WTC11 (cell line): ENCODE measurements at regions of chr16 and their contacts with region 1.

Region 1: GRCh38 chr16:12095275-12096156 is 119.0 kb downstream of the SNX29 start:
- DNase-seq: peak; percentile 67
- ATAC-seq: no peak
- H3K4me3 Mint-ChIP-seq: no peak overlapping the region
- H3K27ac Mint-ChIP-seq: no peak overlapping the region
- H3K4me1 Mint-ChIP-seq: peaks cover 62% of the 10 kb centered on the region
- H3K27me3 Mint-ChIP-seq: peaks cover 8% of the 10 kb centered on the region
- CTCF ChIP-seq: peak; percentile 91

Region 2: DNA sequence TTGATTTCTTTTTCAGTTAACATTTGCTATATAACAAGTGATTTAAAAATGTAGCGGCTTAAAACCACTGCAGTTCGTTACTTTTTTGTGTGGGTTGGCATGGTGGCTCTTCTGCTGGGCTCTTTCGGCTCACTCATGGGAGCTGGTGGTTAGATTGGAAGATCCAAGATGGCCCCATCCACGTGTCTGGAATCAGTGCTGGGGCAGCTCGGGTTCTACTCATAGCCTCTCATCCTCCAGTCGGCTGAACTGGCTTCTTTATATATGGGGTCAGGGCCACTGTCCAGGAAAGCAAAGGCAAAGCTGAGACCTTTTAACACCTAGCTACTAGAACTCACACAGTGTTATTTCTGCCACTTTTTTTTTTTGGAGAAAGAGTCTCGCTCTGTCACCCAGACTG is 45.2 kb before region 1 on chr16:
- CTCF ChIA-PET with region 1: no interaction called
- POLR2A ChIA-PET with region 1: no interaction called
- DNase-seq: no peak
- ATAC-seq: no peak
- H3K4me3 Mint-ChIP-seq: no peak overlapping the region
- H3K27ac Mint-ChIP-seq: no peak overlapping the region
- H3K4me1 Mint-ChIP-seq: no peaks in the 10 kb centered on the region
- H3K27me3 Mint-ChIP-seq: no peaks in the 10 kb centered on the region
- CTCF ChIP-seq: no peak

Region 3: DNA sequence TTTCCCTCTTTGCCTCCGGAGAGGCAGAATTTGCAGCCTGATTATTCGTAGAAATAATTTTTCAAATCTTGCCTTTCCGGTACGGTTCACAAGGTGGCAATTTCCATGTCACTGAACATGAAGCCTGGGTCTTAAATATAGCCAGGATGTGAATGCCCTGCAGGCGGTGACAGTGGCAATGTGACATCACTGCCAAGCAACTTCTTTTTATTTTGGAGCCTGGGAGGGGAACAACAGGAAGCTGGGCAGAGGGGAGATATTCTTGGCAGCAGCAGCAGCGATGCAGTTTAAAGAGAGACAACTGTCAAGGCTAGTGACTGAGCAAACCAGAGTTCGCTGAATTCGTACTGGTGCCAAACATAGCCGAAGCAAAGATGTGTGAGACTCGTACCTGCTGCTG is 52.2 kb after region 1 on chr16:
- CTCF ChIA-PET with region 1: interaction called, 47 read pairs
- POLR2A ChIA-PET with region 1: interaction called, 4 read pairs
- DNase-seq: no peak
- ATAC-seq: peak; percentile 25
- H3K4me3 Mint-ChIP-seq: no peak overlapping the region
- H3K27ac Mint-ChIP-seq: peak overlapping the region; percentile 58
- H3K4me1 Mint-ChIP-seq: peaks cover 41% of the 10 kb centered on the region
- H3K27me3 Mint-ChIP-seq: no peaks in the 10 kb centered on the region
- CTCF ChIP-seq: no peak

Region 4: DNA sequence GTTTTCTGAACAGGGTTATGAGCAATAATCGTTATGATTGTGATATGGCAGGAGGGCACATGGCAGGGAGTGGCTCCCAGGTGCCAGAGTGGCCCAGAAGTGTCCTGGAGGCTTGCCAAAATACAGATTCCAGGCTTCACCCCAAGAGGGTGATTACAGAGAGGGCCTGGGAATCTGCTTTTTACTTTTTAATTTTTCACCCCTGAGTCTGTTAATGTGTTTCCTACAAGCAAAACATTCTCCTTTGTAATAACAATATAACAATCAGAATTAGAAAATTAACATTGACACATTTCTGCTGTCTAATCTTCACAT is 93.4 kb after region 1 on chr16:
- CTCF ChIA-PET with region 1: interaction called, 10 read pairs
- POLR2A ChIA-PET with region 1: no interaction called
- DNase-seq: no peak
- ATAC-seq: no peak
- H3K4me3 Mint-ChIP-seq: no peak overlapping the region
- H3K27ac Mint-ChIP-seq: no peak overlapping the region
- H3K4me1 Mint-ChIP-seq: peaks cover 14% of the 10 kb centered on the region
- H3K27me3 Mint-ChIP-seq: no peaks in the 10 kb centered on the region
- CTCF ChIP-seq: no peak

Region 5: GRCh38 chr16:12215277-12216105 is 120.0 kb after region 1 on chr16:
- CTCF ChIA-PET with region 1: interaction called, 62 read pairs
- POLR2A ChIA-PET with region 1: no interaction called
- DNase-seq: peak; percentile 61
- ATAC-seq: peak; percentile 92
- H3K4me3 Mint-ChIP-seq: no peak overlapping the region
- H3K27ac Mint-ChIP-seq: no peak overlapping the region
- H3K4me1 Mint-ChIP-seq: peaks cover 30% of the 10 kb centered on the region
- H3K27me3 Mint-ChIP-seq: no peaks in the 10 kb centered on the region
- CTCF ChIP-seq: peak; percentile 52

Region 6: GRCh38 chr16:12257926-12258561 is 162.5 kb after region 1 on chr16:
- CTCF ChIA-PET with region 1: interaction called, 75 read pairs
- POLR2A ChIA-PET with region 1: no interaction called
- DNase-seq: peak; percentile 32
- ATAC-seq: no peak
- H3K4me3 Mint-ChIP-seq: no peak overlapping the region
- H3K27ac Mint-ChIP-seq: no peak overlapping the region
- H3K4me1 Mint-ChIP-seq: peaks cover 15% of the 10 kb centered on the region
- H3K27me3 Mint-ChIP-seq: no peaks in the 10 kb centered on the region; the same call in 1 of the 2 replicates
- CTCF ChIP-seq: no peak

Region 7: DNA sequence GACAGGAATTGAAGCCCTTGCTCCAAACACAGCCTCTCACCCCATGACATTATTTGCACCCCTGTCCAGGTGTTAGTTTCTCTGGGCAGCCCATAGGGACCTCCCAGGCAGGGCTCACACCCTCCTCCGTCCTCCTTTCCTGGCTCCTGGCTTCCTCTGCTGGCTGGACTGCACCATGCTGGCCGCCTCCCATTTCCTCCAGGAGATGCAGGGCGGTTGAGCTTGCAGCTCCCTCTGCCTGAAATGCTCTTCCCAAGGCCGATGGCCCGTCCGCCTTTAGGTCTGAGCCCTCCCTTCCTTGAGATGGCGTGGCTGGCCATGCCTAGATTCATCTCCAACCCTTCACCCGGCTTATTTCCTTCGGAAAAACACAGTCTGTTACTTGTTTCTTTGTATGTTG is 215.8 kb after region 1 on chr16:
- CTCF ChIA-PET with region 1: interaction called, 18 read pairs
- POLR2A ChIA-PET with region 1: no interaction called
- DNase-seq: peak; percentile 58
- ATAC-seq: peak; percentile 87
- H3K4me3 Mint-ChIP-seq: peak overlapping the region; percentile 9; the same call in 1 of the 2 replicates
- H3K27ac Mint-ChIP-seq: peak overlapping the region; percentile 36
- H3K4me1 Mint-ChIP-seq: peaks cover 47% of the 10 kb centered on the region
- H3K27me3 Mint-ChIP-seq: peaks cover 2% of the 10 kb centered on the region; the same call in 1 of the 2 replicates
- CTCF ChIP-seq: no peak